BJ (cell line): ENCODE measurements at regions of chr13 and their contacts with region 1.

Region 1: GRCh38 chr13:110306960-110307746 is at the starts of genes COL4A1 and COL4A2:
- DNase-seq: no peak
- H3K4me3 ChIP-seq: peak within 1 kb of the TSS; percentile 76
- H3K27me3 ChIP-seq: no peaks in the 10 kb centered on the region
- CTCF ChIP-seq: no peak
- polyA plus RNA-seq, gene COL4A1: 345 and 375 TPM in 2 replicates
- polyA plus RNA-seq, gene COL4A2: 410 and 886 TPM in 2 replicates

Region 2: DNA sequence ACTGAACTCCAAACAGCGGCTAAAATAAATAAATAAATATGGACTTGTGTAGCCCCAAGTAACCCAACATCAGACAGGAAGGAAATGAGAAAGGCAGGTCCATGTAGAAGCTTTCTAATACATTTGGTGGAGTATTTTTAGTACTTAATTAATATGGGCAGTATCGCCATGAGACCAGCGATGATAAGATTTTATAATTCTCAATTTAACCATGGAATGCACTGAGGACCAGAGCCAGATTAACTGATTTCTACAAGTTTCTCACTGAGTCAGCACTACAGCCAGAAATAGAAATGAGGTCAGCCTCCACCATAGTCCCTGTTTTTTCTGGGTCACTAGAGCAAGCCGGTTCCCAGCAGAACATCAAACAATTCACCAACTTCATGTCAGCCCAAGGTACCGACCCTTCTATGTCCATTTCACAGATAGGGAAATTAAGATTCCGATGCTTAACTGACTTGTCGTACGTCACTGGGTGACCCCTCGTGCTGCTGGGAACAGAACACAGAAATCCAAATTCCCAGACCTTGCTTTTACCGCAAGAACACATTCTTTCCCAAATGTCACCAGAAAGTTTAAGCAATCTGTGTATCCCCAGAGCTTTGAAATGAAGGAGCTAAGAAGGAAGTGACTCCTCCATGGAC is 90.6 kb before region 1 on chr13:
- CTCF ChIA-PET with region 1: interaction called, 10 read pairs
- POLR2A ChIA-PET with region 1: no interaction called
- DNase-seq: no peak
- H3K4me3 ChIP-seq: no peak overlapping the region
- H3K27me3 ChIP-seq: no peaks in the 10 kb centered on the region
- CTCF ChIP-seq: no peak

Region 3: GRCh38 chr13:110246530-110246929 is 60.6 kb before region 1 on chr13:
- CTCF ChIA-PET with region 1: interaction called, 13 read pairs
- POLR2A ChIA-PET with region 1: interaction called, 3 read pairs
- DNase-seq: no peak
- H3K4me3 ChIP-seq: no peak overlapping the region
- H3K27me3 ChIP-seq: no peaks in the 10 kb centered on the region
- CTCF ChIP-seq: no peak